Colonic mucosa (tissue), 4 donors: ENCODE measurements at regions of chr7 and their contacts with region 1.

Region 1: DNA sequence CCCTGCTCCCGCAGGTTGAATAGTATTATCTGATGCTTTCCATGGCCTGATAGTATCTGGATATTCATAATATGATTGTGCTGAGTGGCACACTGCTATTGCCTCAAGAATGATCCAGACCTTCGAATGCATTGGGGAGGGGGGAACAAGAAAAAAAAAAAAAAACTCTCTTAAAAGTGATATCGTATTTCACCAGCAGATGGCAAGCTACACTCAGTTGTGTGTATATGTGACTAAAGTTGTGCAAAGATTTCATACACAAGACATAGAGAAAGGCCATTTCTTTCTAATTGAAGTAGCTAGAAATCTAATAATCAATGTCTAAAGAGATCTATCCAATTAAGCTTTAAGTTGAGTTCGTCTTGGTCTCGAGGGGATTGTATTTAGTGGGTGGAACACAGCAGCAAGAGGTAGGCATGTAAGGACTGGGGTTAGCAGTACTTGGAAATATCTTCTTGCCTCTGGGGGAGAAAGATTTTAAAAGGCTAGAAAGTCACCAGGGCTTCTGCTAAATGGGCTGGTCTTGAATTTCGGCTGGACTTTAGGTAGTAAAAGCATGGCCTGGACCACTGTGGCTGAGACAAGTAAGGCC is 15.3 kb downstream of the SFRP4 start:
- DNase-seq: no peak
- H3K4me3 ChIP-seq: no peak overlapping the region
- H3K27ac ChIP-seq: no peak overlapping the region
- H3K4me1 ChIP-seq: no peaks in the 10 kb centered on the region
- H3K27me3 ChIP-seq: no peaks in the 10 kb centered on the region
- CTCF ChIP-seq: peak; percentile 38

Region 2: DNA sequence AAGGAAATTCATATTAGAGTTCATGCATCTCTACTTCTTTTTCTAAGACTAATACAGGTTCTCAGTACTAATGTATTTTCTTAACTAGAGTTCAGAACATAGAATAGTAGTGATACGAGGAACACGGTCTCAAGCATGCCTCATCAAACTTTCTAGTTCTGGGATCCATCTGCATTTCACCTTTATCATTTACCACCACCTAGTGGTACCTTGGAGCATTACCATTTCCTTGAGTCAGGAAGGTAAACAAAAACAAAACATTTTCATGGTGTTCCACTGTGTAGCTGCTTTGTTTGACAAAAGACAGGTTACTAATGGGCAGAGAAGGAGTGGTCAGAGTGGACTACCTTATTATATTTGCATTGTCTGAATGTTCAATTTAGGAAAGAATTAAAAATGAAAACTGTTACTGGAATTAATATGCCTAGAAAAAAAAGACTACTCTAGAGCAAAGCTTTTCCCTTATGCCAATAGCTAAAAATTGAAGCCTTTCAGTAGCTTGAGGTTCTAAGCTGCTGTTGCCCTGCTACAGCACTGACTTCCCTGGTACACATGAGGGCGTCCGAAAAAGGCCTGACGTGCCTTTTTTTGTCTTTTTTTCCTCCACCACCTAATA is 321.3 kb after region 1 on chr7:
- intact Hi-C with region 1: loop called (anchors 5 kb)
- DNase-seq: peak; percentile 54
- H3K4me3 ChIP-seq: no peak overlapping the region
- H3K27ac ChIP-seq: no peak overlapping the region
- H3K4me1 ChIP-seq: no peaks in the 10 kb centered on the region
- H3K27me3 ChIP-seq: no peaks in the 10 kb centered on the region
- CTCF ChIP-seq: peak; percentile 89